Activated CD8-positive, alpha-beta memory T cell treated with anti-CD3 and anti-CD28 coated beads, Interleukin-2, amount 10 ng/mL, durations not matched to agents 7 days and 5 days (primary cell): ENCODE measurements at regions of chr2 and their contacts with region 1.

Region 1: DNA sequence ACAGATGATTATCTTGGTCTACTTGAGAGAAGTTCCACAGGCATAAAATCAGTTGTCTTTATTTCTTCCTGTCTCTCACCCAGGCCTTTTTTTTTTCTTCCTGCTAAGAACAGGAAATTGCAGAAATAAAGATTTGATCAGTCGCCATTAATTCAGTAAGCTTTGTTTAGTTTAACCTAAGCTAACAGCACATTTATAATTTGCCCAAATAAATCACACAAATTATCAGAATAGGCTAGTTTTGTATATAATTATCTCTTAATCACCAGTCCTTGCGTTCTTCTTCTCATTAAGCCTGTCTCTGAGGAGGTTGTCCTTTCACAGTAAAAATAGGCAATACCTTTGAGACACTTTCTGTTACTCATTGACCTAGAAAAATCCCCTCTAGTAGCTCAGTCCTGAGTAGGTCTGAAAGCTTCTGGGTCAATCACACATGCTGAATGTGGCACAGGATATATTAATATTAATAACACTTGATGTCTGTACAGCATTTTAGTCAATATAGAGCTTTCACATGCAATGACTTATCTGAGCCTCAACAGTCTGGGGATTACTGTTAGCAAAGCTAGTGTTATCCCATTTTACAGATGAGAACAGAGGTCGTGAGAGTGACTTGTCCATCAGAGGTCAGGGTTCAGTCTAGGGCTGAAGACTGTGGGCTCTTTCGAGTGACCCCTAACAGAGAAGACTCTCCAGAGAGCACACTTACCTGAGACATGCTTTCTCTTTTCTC is 11.2 kb upstream of the STK17B start:
- DNase-seq: no peak
- ATAC-seq: peak; percentile 14
- H3K4me3 Mint-ChIP-seq: peak overlapping the region; percentile 65
- H3K27ac Mint-ChIP-seq: peak overlapping the region; percentile 98
- H3K4me1 Mint-ChIP-seq: peaks cover 86% of the 10 kb centered on the region
- H3K27me3 Mint-ChIP-seq: no peaks in the 10 kb centered on the region

Region 2: GRCh38 chr2:196195302-196195701 is 12.7 kb after region 1 on chr2:
- CTCF ChIA-PET with region 1: interaction called, 37 read pairs
- DNase-seq: no peak
- ATAC-seq: no peak
- H3K4me3 Mint-ChIP-seq: no peak overlapping the region
- H3K27ac Mint-ChIP-seq: peak overlapping the region; percentile 66
- H3K4me1 Mint-ChIP-seq: peaks cover 48% of the 10 kb centered on the region
- H3K27me3 Mint-ChIP-seq: no peaks in the 10 kb centered on the region

Region 3: GRCh38 chr2:196200557-196200956 is 18.0 kb after region 1 on chr2:
- CTCF ChIA-PET with region 1: interaction called, 37 read pairs
- DNase-seq: peak; percentile 79
- ATAC-seq: peak; percentile 98
- H3K4me3 Mint-ChIP-seq: peak overlapping the region; percentile 70
- H3K27ac Mint-ChIP-seq: peak overlapping the region; percentile 92
- H3K4me1 Mint-ChIP-seq: peaks cover 56% of the 10 kb centered on the region
- H3K27me3 Mint-ChIP-seq: no peaks in the 10 kb centered on the region

Region 4: DNA sequence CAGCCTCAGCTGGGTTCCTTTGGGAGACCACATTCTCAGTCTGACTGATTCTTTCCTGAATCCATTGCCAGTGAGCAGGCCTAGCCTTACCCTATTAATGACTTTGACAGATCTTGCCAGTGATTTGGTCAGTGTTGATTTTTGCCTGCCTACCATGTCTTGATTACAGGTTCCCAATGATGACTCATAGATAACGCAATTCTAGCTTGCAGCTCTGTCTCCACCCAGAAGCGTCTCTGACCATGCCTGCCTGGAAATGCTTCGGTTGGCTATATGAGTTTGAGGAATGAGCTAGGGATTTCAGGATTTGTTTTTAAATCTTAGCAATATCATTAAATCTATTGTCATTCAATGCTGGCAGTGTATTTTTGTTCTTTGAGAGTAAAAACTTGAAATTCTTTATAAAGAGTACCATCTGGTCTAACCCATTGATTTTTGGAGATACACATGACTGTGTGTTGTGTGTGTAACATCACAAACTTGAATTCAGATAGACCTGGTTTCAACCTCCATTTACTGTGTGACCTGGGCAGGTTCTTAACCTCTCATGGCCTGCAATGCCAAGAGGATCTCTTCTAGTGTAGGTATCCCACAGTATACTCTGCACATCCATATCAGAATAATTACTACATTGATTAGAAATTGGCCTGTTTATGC is 513.9 kb after region 1 on chr2:
- CTCF ChIA-PET with region 1: no interaction called
- DNase-seq: no peak
- ATAC-seq: no peak
- H3K4me3 Mint-ChIP-seq: no peak overlapping the region
- H3K27ac Mint-ChIP-seq: no peak overlapping the region
- H3K4me1 Mint-ChIP-seq: no peaks in the 10 kb centered on the region
- H3K27me3 Mint-ChIP-seq: no peaks in the 10 kb centered on the region